GM18951 (cell line): ENCODE measurements at regions of chr5 and their contacts with region 1.

Region 1: GRCh38 chr5:126794157-126794828 is 17.4 kb downstream of the LMNB1 start:
- POLR2A ChIP-seq: no peak

Region 2: GRCh38 chr5:126676195-126676624 is 118.1 kb before region 1 on chr5:
- in situ Hi-C with region 1: loop called (anchors 5 kb)
- POLR2A ChIP-seq: no peak